Activated CD4-positive, alpha-beta T cell treated with anti-CD3 and anti-CD28 coated beads, Interleukin-2, amount 10 ng/mL, durations not matched to agents 24 days and 14 days (primary cell): ENCODE measurements at regions of chr7 and their contacts with region 1.

Region 1: GRCh38 chr7:101138213-101138870 is 11.4 kb downstream of the SERPINE1 start:
- DNase-seq: peak; percentile 90
- H3K4me3 Mint-ChIP-seq: peak overlapping the region; percentile 66
- H3K27ac Mint-ChIP-seq: peak overlapping the region; percentile 74
- H3K4me1 Mint-ChIP-seq: peaks cover 44% of the 10 kb centered on the region
- H3K27me3 Mint-ChIP-seq: peaks cover 30% of the 10 kb centered on the region

Region 2: GRCh38 chr7:101085162-101085987 is 53.0 kb before region 1 on chr7 and contains the start of gene TRIM56:
- intact Hi-C with region 1: loop called (anchors 1 kb)
- DNase-seq: peak; percentile 94
- H3K4me3 Mint-ChIP-seq: peak within 1 kb of the TSS; percentile 98
- H3K27ac Mint-ChIP-seq: peak within 1 kb of the TSS; percentile 99
- H3K4me1 Mint-ChIP-seq: peaks cover 26% of the 10 kb centered on the region
- H3K27me3 Mint-ChIP-seq: peaks cover 3% of the 10 kb centered on the region
- total RNA-seq, gene TRIM56: 41.1 and 44.5 TPM in 2 replicates

Region 3: DNA sequence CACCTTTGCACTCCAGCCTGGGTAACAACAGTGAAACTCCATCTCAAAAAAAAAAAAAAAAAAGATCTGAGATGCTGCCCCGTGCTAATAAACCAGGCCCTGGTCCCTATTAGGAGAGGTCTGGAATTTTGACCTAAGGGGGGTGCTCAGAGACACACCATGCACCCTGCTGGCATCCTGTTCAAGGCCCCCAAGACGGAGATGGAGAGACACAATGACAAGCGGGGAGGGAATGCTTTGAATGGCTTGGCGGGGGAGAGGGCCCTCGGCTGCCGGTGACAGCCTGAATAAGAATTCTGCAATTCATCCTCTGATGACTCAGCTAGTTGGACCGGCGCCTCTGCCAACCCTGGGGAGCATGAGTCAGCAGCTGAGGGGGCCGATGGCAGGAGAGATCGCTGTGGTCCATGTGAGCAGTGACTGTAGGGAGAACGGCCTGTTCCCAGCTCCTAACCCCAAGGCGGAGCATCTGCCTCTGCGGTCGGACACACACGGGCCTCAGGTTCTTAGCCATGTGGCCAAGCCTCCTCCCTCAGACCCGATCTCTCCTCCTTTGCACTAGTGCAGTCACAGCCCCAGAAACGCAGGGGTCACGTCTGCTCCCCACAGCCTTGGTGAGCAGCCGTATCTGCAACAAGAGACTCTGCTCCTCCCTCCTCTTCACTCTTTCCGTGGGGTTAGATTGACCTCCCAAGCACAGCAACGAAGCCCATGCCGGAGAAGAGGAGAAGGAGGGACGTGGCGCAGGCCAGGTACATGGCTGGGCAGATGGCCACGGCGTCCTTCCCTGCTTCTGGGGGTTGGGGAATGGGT is 38.2 kb before region 1 on chr7:
- intact Hi-C with region 1: loop called (anchors 2 kb)
- DNase-seq: peak; percentile 67
- H3K4me3 Mint-ChIP-seq: peak overlapping the region; percentile 20
- H3K27ac Mint-ChIP-seq: peak overlapping the region; percentile 65
- H3K4me1 Mint-ChIP-seq: peaks cover 13% of the 10 kb centered on the region
- H3K27me3 Mint-ChIP-seq: peaks cover 19% of the 10 kb centered on the region

Region 4: DNA sequence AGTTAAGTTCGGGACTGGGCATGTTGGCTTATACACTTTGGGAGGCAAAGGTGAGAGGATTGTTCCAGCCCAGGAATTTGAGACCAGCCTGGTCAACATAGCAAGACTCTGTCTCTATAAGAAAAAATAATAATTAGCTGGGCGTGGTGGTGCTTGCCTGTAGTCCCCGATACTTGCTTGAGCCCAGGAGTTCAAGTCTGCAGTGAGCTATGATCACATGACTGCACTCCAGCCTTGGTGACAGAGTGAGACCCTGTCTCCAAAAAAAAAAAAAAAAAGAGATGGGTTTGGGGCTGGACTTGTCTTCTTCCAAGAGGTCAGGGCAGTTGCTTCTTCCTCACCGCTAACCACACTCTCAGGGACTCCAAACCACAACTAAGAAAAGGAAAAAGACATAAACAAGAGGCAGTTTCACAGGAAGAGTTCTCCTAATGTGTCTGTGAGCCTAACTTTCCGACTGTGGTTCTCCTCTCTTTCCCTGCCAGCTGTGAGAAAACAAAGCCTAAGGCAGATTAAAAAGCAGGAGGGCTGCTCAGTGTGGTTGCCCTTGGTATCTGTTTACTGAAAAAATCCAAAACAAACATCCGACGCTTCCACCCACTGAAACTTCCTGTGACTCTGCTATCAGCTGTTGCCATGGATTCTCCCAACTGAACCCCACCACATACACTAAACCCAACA is 13.8 kb before region 1 on chr7:
- intact Hi-C with region 1: loop called (anchors 1 kb)
- DNase-seq: peak; percentile 75
- H3K4me3 Mint-ChIP-seq: peak overlapping the region; percentile 55
- H3K27ac Mint-ChIP-seq: peak overlapping the region; percentile 67
- H3K4me1 Mint-ChIP-seq: peaks cover 49% of the 10 kb centered on the region
- H3K27me3 Mint-ChIP-seq: peaks cover 46% of the 10 kb centered on the region